Tibial artery (tissue), 4 donors: ENCODE measurements at regions of chr5 and their contacts with region 1.

Region 1: DNA sequence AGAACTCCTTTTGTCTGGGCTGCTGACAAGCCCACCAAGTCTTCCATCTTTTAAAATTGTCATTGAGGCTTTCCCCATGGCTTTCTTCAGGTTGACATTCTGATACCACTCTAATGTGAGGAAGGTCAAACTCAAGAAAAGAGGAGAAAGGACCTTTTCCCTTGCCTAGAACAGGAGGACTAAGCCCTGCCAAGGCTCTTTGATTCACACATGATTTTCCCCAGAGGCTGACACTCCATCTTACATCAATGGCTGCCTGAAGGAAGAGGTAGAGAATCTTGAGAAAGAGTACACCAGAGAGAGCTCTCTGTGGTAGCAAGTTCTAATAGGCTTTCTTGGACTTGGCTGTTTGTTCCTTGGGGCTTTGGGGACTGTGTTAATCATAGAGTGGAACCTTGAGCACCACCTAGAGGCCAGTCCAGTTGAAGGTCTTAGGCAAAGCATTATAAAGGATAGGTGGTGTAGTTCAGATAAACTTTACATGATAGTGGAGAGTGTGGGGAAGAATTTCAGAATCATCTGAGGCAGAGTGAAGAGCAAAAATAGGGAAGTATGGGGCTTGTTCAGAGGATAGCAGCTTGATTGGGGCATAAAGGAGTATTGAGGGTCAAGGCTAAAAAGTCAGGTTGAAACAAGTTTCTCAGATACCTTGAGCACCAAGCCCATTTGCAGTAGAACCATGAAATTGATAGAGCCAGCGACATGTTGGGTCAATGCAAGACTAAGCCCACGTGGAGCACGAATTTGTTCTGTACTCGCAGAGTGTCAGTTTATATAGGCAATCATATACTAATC is 36.7 kb downstream of the NDFIP1 start:
- DNase-seq: peak; percentile 72 to 79
- H3K4me3 ChIP-seq: no peak overlapping the region
- H3K27ac ChIP-seq: peak overlapping the region in 1 of 2 donors; percentile 22
- H3K4me1 ChIP-seq: peaks cover 0 to 9% (median 0%) of the 10 kb centered on the region in 4 donors
- H3K27me3 ChIP-seq: no peaks in the 10 kb centered on the region
- CTCF ChIP-seq: peak; percentile 57 to 61

Region 2: GRCh38 chr5:141992349-141992963 is 152.8 kb before region 1 on chr5:
- intact Hi-C with region 1: loop called (anchors 5 kb)
- DNase-seq: peak; percentile 75 to 85
- H3K4me3 ChIP-seq: no peak overlapping the region
- H3K27ac ChIP-seq: no peak overlapping the region
- H3K4me1 ChIP-seq: peaks cover 0 to 5% (median 0%) of the 10 kb centered on the region in 4 donors
- H3K27me3 ChIP-seq: no peaks in the 10 kb centered on the region
- CTCF ChIP-seq: peak; percentile 80

Region 3: DNA sequence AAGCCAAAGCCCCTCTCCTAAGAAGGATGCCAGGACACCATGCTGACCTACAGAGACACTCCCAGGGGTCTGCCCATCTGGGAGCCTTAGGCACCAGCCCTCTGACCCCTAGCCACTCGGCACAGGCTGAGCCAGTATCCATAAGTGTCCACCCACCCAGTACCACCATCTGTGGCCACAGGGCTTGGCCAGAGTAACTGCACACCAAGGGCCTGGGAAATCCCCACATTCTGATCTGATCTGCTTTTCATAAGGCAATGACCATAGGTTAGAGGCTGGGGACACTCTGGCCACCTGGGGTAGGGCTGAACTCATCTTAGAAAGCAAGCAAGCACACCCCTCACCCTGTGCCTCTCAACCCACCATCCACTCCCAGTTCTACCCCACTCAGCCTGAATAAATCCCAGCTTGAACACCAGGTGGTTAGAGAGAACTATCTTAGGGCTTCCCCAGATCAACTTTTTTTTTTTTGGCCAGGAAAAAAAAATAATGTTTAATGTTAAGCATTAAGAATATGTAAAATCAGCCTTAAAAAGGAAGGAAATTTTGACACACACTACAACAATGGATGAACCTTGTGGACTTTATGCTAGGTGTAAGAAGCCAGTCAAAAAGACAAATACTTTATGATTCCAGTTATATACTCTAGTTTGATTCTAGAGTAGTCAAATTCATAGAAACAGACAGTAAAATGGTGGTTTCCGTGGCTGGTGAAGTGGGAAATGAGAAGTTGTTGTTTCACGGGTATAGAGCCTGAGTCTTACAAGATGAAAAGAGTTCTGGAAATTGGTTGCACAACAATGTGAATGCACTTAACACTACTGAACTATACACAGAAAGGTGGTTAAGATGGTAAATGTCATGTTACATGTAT is 138.7 kb before region 1 on chr5:
- intact Hi-C with region 1: loop called (anchors 5 kb)
- DNase-seq: no peak
- H3K4me3 ChIP-seq: no peak overlapping the region
- H3K27ac ChIP-seq: no peak overlapping the region
- H3K4me1 ChIP-seq: peaks cover 0 to 2% (median 1%) of the 10 kb centered on the region in 4 donors
- H3K27me3 ChIP-seq: no peaks in the 10 kb centered on the region
- CTCF ChIP-seq: no peak